ENCODE measurements at regions of chr6 and their contacts with region 1.

Region 1: GRCh38 chr6:125790358-125791150 is at the start of gene NCOA7:
- DNase-seq: peak; percentile 72 to 90 (median 81)
- H3K4me3 ChIP-seq: peak within 1 kb of the TSS; percentile 88 to 99 (median 94)
- H3K27ac ChIP-seq: peak within 1 kb of the TSS; percentile 84 to 88
- H3K4me1 ChIP-seq: peaks cover 28 to 57% (median 43%) of the 10 kb centered on the region in 4 experiments
- H3K27me3 ChIP-seq: no peaks in the 10 kb centered on the region

Region 2: GRCh38 chr6:125546841-125547251 is 243.7 kb before region 1 on chr6:
- CTCF ChIA-PET with region 1: no interaction called
- POLR2A ChIA-PET with region 1: no interaction called
- DNase-seq: no peak
- H3K4me3 ChIP-seq: no peak overlapping the region
- H3K27ac ChIP-seq: no peak overlapping the region
- H3K4me1 ChIP-seq: no peaks in the 10 kb centered on the region
- H3K27me3 ChIP-seq: peaks cover 0 to 3% (median 0%) of the 10 kb centered on the region in 5 experiments

Region 3: DNA sequence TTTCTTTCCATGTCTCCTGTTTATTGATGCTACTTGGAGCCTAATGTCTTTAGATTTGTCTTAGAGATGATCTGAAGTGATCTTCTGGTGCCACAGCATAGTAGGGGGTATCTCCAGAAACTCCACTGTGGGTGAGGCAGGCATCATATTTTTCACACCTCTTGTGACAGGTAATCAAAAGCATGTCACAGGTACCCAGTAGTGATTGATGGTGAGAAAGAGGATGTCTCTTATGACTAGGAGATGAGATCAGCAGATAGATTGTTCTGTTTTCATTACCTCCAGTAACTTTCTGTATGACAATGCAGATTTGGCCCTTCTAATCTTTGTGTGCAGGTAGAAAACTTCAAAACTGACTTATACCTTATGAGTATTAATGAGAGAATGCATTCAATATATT is 13.7 kb after region 1 on chr6:
- CTCF ChIA-PET with region 1: interaction called, 55 read pairs
- POLR2A ChIA-PET with region 1: no interaction called
- DNase-seq: peak in 1 of 3 donors; percentile 54
- H3K4me3 ChIP-seq: peak overlapping the region in 1 of 7 experiments; percentile 12
- H3K27ac ChIP-seq: no peak overlapping the region
- H3K4me1 ChIP-seq: peaks cover 30 to 69% (median 46%) of the 10 kb centered on the region in 4 experiments
- H3K27me3 ChIP-seq: no peaks in the 10 kb centered on the region

Region 4: DNA sequence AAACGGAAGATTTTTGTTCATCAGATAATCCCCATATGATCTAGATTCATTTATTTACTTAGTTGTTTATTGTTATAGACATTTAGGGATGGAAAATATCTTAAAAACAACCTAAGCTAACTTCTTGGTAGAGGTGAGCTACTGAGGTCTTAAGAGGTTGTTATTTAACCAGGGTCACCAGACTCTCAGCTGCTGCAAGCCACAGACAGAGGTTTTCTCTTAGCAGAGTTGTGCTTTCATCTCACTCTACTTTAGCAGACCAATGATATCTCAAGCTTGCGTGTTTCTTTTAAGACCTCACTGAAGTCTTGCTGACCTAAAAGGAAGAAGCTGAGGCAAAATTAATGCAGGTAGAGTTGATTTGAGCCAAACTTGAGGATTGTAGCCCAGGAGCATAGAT is 43.8 kb after region 1 on chr6:
- CTCF ChIA-PET with region 1: interaction called, 131 read pairs
- POLR2A ChIA-PET with region 1: interaction called, 3 read pairs
- DNase-seq: peak in 1 of 3 donors; percentile 55
- H3K4me3 ChIP-seq: peak overlapping the region in 3 of 7 experiments; percentile 0 to 22 (median 13)
- H3K27ac ChIP-seq: peak overlapping the region; percentile 25 to 44
- H3K4me1 ChIP-seq: peaks cover 39 to 72% (median 60%) of the 10 kb centered on the region in 4 experiments
- H3K27me3 ChIP-seq: no peaks in the 10 kb centered on the region

Region 5: DNA sequence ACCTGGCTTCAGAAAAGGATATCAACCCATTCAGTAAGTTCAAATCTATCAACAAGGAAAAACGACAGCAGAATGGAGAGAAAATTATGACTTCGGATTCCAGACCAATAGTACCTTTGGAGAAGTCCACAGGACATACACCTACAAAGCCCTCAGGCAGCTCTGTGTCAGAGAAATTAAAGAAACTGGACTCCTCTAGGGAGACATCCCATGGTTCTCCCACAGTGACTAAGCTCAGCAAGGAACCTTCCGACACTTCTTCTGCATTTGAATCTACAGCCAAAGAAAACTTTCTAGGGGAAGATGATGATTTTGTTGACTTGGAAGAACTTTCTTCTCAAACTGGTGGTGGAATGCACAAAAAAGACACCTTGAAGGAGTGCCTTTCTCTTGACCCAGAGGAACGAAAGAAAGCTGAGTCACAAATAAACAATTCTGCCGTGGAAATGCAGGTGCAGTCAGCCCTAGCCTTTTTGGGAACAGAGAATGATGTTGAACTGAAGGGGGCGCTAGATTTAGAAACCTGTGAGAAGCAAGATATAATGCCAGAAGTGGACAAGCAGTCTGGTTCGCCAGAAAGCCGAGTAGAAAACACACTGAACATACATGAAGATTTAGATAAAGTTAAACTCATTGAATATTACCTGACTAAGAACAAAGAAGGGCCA is 98.6 kb after region 1 on chr6:
- CTCF ChIA-PET with region 1: interaction called, 12 read pairs
- POLR2A ChIA-PET with region 1: no interaction called
- DNase-seq: peak; percentile 51 to 73 (median 70)
- H3K4me3 ChIP-seq: no peak overlapping the region
- H3K27ac ChIP-seq: no peak overlapping the region
- H3K4me1 ChIP-seq: peaks cover 0 to 20% (median 1%) of the 10 kb centered on the region in 4 experiments
- H3K27me3 ChIP-seq: no peaks in the 10 kb centered on the region

Region 6: GRCh38 chr6:125906158-125906998 is 115.8 kb after region 1 on chr6:
- CTCF ChIA-PET with region 1: interaction called, 37 read pairs
- POLR2A ChIA-PET with region 1: no interaction called
- DNase-seq: peak; percentile 53 to 66 (median 55)
- H3K4me3 ChIP-seq: no peak overlapping the region
- H3K27ac ChIP-seq: no peak overlapping the region
- H3K4me1 ChIP-seq: peaks cover 0 to 10% (median 7%) of the 10 kb centered on the region in 4 experiments
- H3K27me3 ChIP-seq: no peaks in the 10 kb centered on the region

Measured in common myeloid progenitor, CD34-positive (primary cell).